Heart right ventricle (tissue), 16 donors: ENCODE measurements at regions of chr7 and their contacts with region 1.

Region 1: GRCh38 chr7:51141451-51142003 is 175.1 kb downstream of the COBL start:
- DNase-seq: no peak
- ATAC-seq: peak; percentile 60 to 89 (median 75)
- H3K4me3 ChIP-seq: no peak overlapping the region
- H3K27ac ChIP-seq: peak overlapping the region in 7 of 10 donors; percentile 34 to 65 (median 51)
- H3K4me1 ChIP-seq: peaks cover 3 to 42% (median 33%) of the 10 kb centered on the region in 9 donors
- H3K27me3 ChIP-seq: no peaks in the 10 kb centered on the region
- CTCF ChIP-seq: peak; percentile 52 to 81 (median 67)

Region 2: GRCh38 chr7:50467817-50468610 is 673.5 kb before region 1 on chr7:
- intact Hi-C with region 1: loop called in 7 of 10 experiments (anchors 5 to 10 kb)
- DNase-seq: peak; percentile 80 to 83
- ATAC-seq: peak; percentile 77 to 95 (median 93)
- H3K4me3 ChIP-seq: peak overlapping the region in 2 of 10 donors; percentile 20 to 21
- H3K27ac ChIP-seq: no peak overlapping the region
- H3K4me1 ChIP-seq: peaks cover 0 to 10% (median 0%) of the 10 kb centered on the region in 9 donors
- H3K27me3 ChIP-seq: peaks cover 0 to 7% (median 0%) of the 10 kb centered on the region in 7 donors
- CTCF ChIP-seq: peak; percentile 88 to 95 (median 91)

Region 3: GRCh38 chr7:50595491-50596102 is 545.9 kb before region 1 on chr7:
- intact Hi-C with region 1: loop called in 1 of 10 experiments (anchors 10 kb)
- DNase-seq: peak in 1 of 2 donors; percentile 29
- ATAC-seq: peak in 6 of 8 donors; percentile 44 to 67 (median 61)
- H3K4me3 ChIP-seq: no peak overlapping the region
- H3K27ac ChIP-seq: no peak overlapping the region
- H3K4me1 ChIP-seq: no peaks in the 10 kb centered on the region
- H3K27me3 ChIP-seq: no peaks in the 10 kb centered on the region
- CTCF ChIP-seq: peak in 7 of 9 donors; percentile 17 to 53 (median 33)

Region 4: DNA sequence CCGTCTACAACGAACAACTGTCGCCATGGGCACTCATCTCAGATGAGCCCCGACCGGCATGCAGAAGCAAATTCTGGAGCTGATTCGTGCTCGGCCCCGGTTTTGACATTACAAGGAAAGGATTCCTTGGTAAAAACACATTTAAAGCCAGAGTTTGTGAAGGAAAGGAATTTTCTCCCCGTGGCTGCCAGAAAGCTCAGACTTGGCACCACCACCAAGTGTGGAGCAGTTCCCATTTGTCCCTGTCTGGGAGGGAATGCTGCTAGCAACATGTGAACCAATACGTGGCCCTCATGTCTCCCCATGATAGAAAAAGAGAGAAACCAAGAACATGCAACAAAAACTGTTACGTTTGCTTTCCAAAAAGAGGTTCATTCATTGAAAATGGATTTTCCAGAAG is 521.1 kb before region 1 on chr7:
- intact Hi-C with region 1: loop called in 3 of 10 experiments (anchors 5 to 10 kb)
- DNase-seq: no peak
- ATAC-seq: no peak
- H3K4me3 ChIP-seq: no peak overlapping the region
- H3K27ac ChIP-seq: peak overlapping the region in 3 of 10 donors; percentile 1 to 78 (median 16)
- H3K4me1 ChIP-seq: peaks cover 0 to 45% (median 24%) of the 10 kb centered on the region in 9 donors
- H3K27me3 ChIP-seq: no peaks in the 10 kb centered on the region
- CTCF ChIP-seq: no peak

Region 5: DNA sequence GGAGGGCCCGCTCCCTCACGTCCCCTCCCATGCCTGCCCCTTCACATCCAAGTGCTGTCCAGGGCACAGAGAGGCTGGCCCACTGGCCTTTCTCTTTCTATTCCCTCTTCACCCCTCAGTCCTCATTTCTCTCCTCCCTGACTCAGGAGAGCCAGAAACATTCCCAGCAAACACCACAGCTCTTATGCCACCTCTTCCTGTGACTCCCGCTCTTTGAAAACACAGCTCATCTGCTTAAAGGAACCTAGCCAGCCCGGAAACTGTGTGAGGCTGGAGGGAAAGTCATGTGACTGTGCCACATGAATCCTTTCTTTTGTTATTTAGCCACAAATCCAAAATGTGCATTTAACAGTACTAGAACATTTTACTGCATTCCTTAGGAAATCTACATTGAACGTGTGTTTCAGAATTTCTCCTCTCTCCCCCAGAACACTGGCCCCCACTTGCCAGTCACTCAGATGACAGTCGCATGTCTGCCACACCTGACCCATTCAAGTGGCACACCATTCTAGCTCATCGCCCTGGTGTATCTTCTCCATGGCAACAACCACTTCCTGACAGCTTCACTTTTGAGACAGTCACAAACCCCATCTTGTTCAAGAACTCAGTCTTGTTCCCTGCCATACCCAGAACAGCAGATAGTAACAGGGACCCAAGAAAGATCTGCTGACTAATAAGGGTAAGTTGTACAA is 401.6 kb before region 1 on chr7:
- intact Hi-C with region 1: loop called in 1 of 10 experiments (anchors 10 kb)
- DNase-seq: no peak
- ATAC-seq: peak in 3 of 8 donors; percentile 24 to 49 (median 35)
- H3K4me3 ChIP-seq: no peak overlapping the region
- H3K27ac ChIP-seq: peak overlapping the region in 1 of 10 donors; percentile 27
- H3K4me1 ChIP-seq: peaks cover 0 to 54% (median 14%) of the 10 kb centered on the region in 9 donors
- H3K27me3 ChIP-seq: no peaks in the 10 kb centered on the region
- CTCF ChIP-seq: no peak

Region 6: DNA sequence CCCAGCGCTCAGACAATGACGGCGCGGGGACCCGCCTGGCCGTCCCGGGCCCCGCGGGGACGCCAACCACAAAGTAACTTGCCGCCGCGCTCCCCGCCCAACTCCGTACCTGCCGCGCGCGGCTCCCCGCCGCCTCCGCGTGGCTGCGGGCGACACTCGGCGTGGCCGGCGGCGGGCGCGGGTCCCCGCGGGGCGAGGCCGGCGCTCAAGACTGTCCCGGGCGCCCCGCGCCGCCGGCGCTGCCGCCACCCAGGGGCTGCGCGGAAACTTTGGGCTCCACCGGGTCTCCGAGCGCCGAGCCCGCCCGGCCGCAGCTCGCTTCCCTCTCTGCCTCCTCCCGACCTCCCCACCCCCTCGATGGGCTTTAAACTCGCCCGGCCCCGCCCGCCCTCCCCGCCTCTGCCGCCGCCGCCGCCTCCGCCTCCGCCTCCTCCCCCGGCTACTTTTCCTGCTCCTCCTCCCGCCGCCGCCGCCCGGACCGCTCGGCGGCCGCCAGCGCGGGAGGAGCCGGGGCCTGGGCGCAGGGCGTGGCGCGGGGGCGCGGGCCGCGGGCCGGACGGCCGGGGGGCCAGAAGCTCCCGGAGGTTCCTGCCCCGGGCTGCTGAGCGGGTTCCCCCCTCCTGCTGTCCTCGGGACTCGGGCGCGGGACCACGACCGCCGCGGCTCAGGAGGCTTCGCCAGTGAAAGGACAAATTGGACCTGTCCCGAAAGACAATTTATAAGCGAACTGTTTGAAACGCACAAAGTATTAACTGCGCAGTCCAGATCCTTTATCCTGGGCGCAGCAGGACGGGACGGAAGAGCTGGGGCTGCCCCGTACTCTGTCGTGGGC is 348.2 kb before region 1 on chr7:
- intact Hi-C with region 1: loop called in 8 of 10 experiments (anchors 5 to 10 kb)
- DNase-seq: peak; percentile 79 to 80
- ATAC-seq: peak; percentile 66 to 89 (median 82)
- H3K4me3 ChIP-seq: peak overlapping the region in 9 of 10 donors; percentile 54 to 94 (median 72)
- H3K27ac ChIP-seq: peak overlapping the region; percentile 74 to 94 (median 81)
- H3K4me1 ChIP-seq: peaks cover 0 to 44% (median 29%) of the 10 kb centered on the region in 9 donors
- H3K27me3 ChIP-seq: peaks cover 0 to 9% (median 0%) of the 10 kb centered on the region in 7 donors
- CTCF ChIP-seq: no peak

Region 7: DNA sequence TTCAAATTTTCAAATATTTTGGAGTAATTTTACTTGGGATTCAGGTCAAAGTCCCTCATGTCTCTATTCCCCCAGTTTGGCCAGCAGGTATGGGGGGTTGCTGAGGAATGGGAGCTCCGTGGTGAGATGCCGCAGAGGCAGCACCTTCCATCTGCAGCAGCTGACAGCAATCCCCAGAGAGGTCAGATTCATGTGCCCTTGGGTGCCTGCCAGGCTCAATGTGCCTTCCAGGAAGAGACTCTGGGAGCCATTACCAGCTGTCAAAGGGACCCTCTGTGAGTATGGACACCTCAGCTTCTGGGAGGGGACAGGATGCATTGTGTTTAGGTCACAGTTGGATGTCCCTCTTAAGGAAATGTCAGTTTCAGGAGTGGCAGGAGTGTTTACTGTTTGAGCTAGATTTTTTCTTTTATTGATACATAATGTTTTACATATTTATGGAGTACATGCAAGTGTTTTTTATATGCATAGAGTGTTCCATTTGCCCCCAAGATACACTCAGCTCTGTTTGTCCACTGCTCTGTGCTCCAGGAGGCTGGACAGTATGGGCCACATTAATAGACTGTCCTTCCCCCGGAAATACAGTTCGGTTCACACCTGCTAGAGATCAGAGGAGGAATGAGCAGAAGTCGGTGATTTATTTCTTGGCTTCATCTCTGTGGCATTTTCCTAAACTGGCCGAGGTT is 283.6 kb before region 1 on chr7:
- intact Hi-C with region 1: no loop called
- DNase-seq: peak; percentile 27 to 41
- ATAC-seq: peak in 4 of 8 donors; percentile 45 to 68 (median 58)
- H3K4me3 ChIP-seq: no peak overlapping the region
- H3K27ac ChIP-seq: no peak overlapping the region
- H3K4me1 ChIP-seq: peaks cover 0 to 18% (median 3%) of the 10 kb centered on the region in 9 donors
- H3K27me3 ChIP-seq: no peaks in the 10 kb centered on the region
- CTCF ChIP-seq: no peak

Region 8: GRCh38 chr7:51067757-51068156 is 73.8 kb before region 1 on chr7:
- intact Hi-C with region 1: loop called in 5 of 10 experiments (anchors 5 kb)
- DNase-seq: peak in 1 of 2 donors; percentile 76
- ATAC-seq: peak; percentile 36 to 59 (median 48)
- H3K4me3 ChIP-seq: no peak overlapping the region
- H3K27ac ChIP-seq: peak overlapping the region in 4 of 10 donors; percentile 4 to 38 (median 31)
- H3K4me1 ChIP-seq: peaks cover 9 to 39% (median 27%) of the 10 kb centered on the region in 9 donors
- H3K27me3 ChIP-seq: no peaks in the 10 kb centered on the region
- CTCF ChIP-seq: peak; percentile 58 to 85 (median 76)

Region 9: GRCh38 chr7:51090411-51090810 is 51.1 kb before region 1 on chr7:
- intact Hi-C with region 1: no loop called
- DNase-seq: no peak
- ATAC-seq: peak in 1 of 8 donors; percentile 35
- H3K4me3 ChIP-seq: no peak overlapping the region
- H3K27ac ChIP-seq: no peak overlapping the region
- H3K4me1 ChIP-seq: peaks cover 0 to 21% (median 4%) of the 10 kb centered on the region in 9 donors
- H3K27me3 ChIP-seq: no peaks in the 10 kb centered on the region
- CTCF ChIP-seq: no peak